ENCODE measurements at regions of chr11 and their contacts with region 1.

Region 1: GRCh38 chr11:65743928-65744698 is 23.5 kb upstream of the RNASEH2C start:
- DNase-seq: peak; percentile 82
- ATAC-seq: peak; percentile 98
- H3K4me3 ChIP-seq: peak overlapping the region in 1 of 3 experiments; percentile 56; a peak in 3 of 6 replicates
- H3K27ac ChIP-seq: no peak overlapping the region
- H3K4me1 ChIP-seq: peaks cover 8% of the 10 kb centered on the region
- H3K27me3 ChIP-seq: no peaks in the 10 kb centered on the region
- CTCF ChIP-seq: peak; percentile 91
- EP300 ChIP-seq: no peak
- POLR2A ChIP-seq: peak; percentile 28 to 60; a peak in 3 of 4 replicates
- RAD21 ChIP-seq: peak; percentile 85

Region 2: DNA sequence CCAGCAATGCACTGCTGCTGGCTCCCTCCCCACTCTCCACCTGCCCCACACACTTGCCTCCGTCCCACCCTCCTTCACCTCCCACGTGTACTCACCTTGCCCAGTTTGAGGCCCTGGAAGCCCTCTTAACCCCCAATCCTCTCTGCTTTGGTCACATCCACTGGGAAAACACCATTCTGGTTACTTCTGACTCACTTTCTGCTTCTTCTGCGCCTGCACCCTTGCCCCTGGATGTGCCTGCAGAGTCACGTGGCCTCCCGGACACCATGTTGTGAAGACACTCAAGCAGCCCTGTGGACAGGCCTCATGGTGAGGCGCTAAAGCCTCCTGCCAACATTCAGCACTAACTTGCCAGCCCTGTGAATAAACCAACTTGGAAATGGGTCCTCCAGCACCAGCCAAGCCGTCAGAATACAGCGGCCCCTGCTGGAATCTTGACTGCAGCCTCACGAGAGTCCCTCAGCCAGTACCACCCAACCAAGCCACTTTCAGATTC is 683.2 kb before region 1 on chr11:
- CTCF ChIA-PET with region 1: no interaction called
- POLR2A ChIA-PET with region 1: no interaction called
- in situ Hi-C with region 1: no loop called
- intact Hi-C with region 1: no loop called
- DNase-seq: peak; percentile 42
- ATAC-seq: peak; percentile 56
- H3K4me3 ChIP-seq: no peak overlapping the region
- H3K27ac ChIP-seq: no peak overlapping the region
- H3K4me1 ChIP-seq: peaks cover 82% of the 10 kb centered on the region
- H3K27me3 ChIP-seq: no peaks in the 10 kb centered on the region
- CTCF ChIP-seq: peak; percentile 71
- EP300 ChIP-seq: no peak
- POLR2A ChIP-seq: no peak
- RAD21 ChIP-seq: peak; percentile 65

Region 3: DNA sequence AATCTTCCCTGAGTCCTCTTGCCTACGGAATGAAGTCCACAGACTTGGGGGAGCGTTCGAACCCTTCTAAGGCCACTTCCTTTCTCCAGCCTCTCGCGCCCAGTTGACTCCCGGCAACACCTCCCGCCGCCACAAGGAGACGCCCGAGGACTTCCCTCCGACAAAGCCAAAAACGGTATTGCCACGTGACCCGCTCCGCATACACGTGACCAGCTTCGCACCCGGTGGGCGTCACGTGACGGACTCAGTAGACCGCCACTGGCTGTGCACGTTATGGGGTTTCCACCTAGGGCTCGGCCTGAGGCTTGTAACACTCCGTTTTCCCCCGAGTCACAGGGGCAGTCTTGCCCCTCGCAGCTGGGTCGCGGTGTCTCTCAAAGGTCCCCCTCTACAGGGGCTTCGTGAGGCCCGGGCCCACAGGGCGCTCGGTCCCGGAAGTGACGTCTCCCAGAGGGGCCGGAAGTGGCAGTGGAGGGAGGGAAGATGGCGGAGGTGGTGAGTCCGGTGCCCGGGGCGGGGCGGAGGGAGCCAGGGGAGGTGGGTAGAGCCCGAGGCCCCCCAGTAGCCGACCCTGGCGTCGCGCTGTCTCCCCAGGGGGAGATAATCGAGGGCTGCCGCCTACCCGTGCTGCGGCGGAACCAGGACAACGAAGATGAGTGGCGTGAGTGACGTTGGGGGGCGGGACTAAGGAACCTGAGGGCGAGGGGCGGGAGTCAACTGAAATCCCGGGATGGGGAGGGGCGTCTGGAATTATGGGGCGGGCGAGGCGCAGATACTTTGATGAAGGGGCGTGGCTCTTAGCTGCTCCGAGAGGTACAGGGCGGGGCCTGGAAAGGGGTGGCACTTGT is 32.1 kb before region 1 on chr11 and contains the start of gene KAT5:
- CTCF ChIA-PET with region 1: interaction called, 4 read pairs
- POLR2A ChIA-PET with region 1: interaction called, 13 read pairs
- in situ Hi-C with region 1: no loop called
- intact Hi-C with region 1: no loop called
- DNase-seq: peak; percentile 95
- ATAC-seq: peak; percentile 85
- H3K4me3 ChIP-seq: peak within 1 kb of the TSS; percentile 61 to 80 (median 66)
- H3K27ac ChIP-seq: peak within 1 kb of the TSS; percentile 96
- H3K4me1 ChIP-seq: peaks cover 27% of the 10 kb centered on the region
- H3K27me3 ChIP-seq: no peaks in the 10 kb centered on the region; a peak in 1 of 5 replicates
- CTCF ChIP-seq: peak; percentile 99
- EP300 ChIP-seq: peak in 1 of 2 experiments; percentile 61; a peak in 3 of 4 replicates
- POLR2A ChIP-seq: peak in 1 of 2 experiments; percentile 55; a peak in 2 of 4 replicates
- RAD21 ChIP-seq: peak; percentile 94
- total RNA-seq, gene KAT5: 45.4 and 48.3 TPM in 2 replicates

Region 4: GRCh38 chr11:65720237-65720934 is 23.7 kb before region 1 on chr11 and contains the start of gene RNASEH2C:
- CTCF ChIA-PET with region 1: no interaction called
- POLR2A ChIA-PET with region 1: interaction called, 15 read pairs
- in situ Hi-C with region 1: no loop called
- intact Hi-C with region 1: no loop called
- DNase-seq: peak; percentile 65
- ATAC-seq: peak; percentile 92
- H3K4me3 ChIP-seq: peak within 1 kb of the TSS; percentile 76 to 89 (median 87)
- H3K27ac ChIP-seq: peak within 1 kb of the TSS; percentile 47
- H3K4me1 ChIP-seq: peaks cover 26% of the 10 kb centered on the region
- H3K27me3 ChIP-seq: no peaks in the 10 kb centered on the region; a peak in 1 of 5 replicates
- CTCF ChIP-seq: peak; percentile 20; the same call in 1 of the 2 replicates
- EP300 ChIP-seq: no peak
- POLR2A ChIP-seq: peak in 1 of 2 experiments; percentile 81; a peak in 2 of 4 replicates
- RAD21 ChIP-seq: peak; percentile 42
- total RNA-seq, gene RNASEH2C: 50.9 and 65.1 TPM in 2 replicates

Region 5: GRCh38 chr11:65773784-65774411 is 29.8 kb after region 1 on chr11:
- CTCF ChIA-PET with region 1: interaction called, 11 read pairs
- POLR2A ChIA-PET with region 1: no interaction called
- in situ Hi-C with region 1: no loop called
- intact Hi-C with region 1: no loop called
- DNase-seq: no peak
- ATAC-seq: no peak
- H3K4me3 ChIP-seq: no peak overlapping the region
- H3K27ac ChIP-seq: no peak overlapping the region
- H3K4me1 ChIP-seq: peaks cover 38% of the 10 kb centered on the region
- H3K27me3 ChIP-seq: no peaks in the 10 kb centered on the region
- CTCF ChIP-seq: peak; percentile 45
- EP300 ChIP-seq: no peak
- POLR2A ChIP-seq: no peak
- RAD21 ChIP-seq: no peak

Region 6: DNA sequence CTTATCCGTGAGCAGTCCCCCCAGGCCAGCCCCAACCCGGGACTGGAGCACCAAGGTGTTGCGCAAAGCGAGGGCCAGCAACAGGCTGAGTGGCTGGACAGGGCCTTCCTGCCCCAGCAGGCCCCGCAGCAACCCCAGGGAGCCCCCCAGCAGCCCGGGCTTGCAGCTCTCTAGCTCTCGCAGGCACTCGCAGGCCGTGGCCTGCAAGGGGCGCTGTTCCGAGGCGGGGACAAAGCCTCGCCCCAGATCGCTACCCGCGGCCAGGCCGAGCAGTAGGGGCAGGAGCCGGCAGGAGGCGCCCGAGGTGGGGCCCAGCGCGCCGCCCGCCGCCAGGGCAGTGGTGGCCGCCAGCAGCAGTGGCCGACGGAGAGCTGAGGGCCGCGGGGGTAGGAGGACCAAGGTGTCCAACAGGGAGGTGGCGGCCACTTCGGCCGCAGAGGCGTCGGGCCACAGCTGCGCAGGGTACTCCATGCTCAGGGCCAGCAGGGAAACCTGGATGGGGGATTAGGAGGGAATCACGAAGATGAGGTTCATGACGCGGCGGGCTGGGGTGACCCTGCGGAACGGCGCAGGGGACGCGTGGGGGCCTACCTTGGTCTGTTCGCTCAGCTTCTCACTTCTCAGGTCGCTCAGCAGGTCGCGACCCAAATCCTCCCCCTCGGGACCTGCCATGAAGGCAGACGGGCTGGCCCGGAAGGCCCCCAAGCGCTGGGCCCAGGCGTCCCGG is 35.9 kb after region 1 on chr11:
- CTCF ChIA-PET with region 1: interaction called, 9 read pairs
- POLR2A ChIA-PET with region 1: interaction called, 10 read pairs
- in situ Hi-C with region 1: no loop called
- intact Hi-C with region 1: no loop called
- DNase-seq: peak; percentile 53
- ATAC-seq: peak; percentile 74
- H3K4me3 ChIP-seq: peak overlapping the region; percentile 59 to 92 (median 62)
- H3K27ac ChIP-seq: peak overlapping the region; percentile 61
- H3K4me1 ChIP-seq: peaks cover 43% of the 10 kb centered on the region
- H3K27me3 ChIP-seq: peaks cover 1 to 28% of the 10 kb centered on the region in 2 experiments; a peak in 4 of 5 replicates
- CTCF ChIP-seq: peak; percentile 80
- EP300 ChIP-seq: no peak
- POLR2A ChIP-seq: peak in 1 of 2 experiments; percentile 19; a peak in 1 of 4 replicates
- RAD21 ChIP-seq: peak; percentile 80

Region 7: DNA sequence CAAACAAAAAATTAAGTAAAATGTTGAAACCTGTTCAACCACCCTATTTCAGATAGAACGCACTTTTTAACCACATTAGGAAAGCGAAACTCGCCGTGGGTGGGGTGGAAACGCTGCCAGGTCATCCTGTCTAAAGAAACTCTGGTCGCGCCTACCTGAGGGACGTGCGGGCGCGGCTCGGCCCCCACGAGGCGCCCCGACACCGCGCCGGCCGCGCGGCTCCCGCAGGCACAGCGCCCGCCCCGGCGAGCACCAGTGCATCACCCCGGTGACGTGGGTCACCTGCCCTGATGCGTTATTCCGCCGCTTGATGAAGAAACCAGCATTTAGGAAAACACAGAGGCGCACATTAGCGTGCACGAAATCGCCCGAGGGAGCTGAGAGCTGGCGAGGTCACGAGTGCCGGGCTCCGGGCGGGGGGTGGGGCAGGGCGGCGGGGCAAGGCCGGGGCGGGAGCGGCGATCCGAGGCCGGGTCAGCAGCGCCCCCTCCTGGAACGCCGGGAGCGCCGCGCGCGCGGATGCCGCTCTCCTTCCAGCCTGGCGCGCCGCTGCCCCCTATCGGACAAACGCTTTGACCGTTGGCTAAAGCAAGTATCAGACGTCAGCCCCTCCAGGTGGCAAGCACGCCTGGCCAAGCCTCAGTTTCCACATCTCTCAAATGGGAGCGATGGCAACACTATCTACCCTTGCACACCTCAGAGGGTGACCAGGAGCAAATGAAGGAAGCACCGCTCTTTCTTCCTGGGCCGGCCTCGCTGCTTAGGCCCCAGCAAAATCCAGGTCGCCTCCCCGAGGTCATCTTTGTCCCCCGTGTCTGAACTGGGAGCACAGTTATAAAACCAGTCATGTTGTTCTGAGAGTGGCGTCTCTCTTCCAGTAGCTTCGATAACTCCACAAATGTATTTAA is 74.0 kb after region 1 on chr11:
- CTCF ChIA-PET with region 1: interaction called, 57 read pairs
- POLR2A ChIA-PET with region 1: interaction called, 8 read pairs
- in situ Hi-C with region 1: loop called (anchors 5 kb)
- intact Hi-C with region 1: loop called (anchors 1 kb)
- DNase-seq: peak; percentile 71
- ATAC-seq: peak; percentile 80
- H3K4me3 ChIP-seq: peak overlapping the region; percentile 51 to 76 (median 63)
- H3K27ac ChIP-seq: no peak overlapping the region
- H3K4me1 ChIP-seq: peaks cover 30% of the 10 kb centered on the region
- H3K27me3 ChIP-seq: 0 out of 5 replicates have a peak, but pooled peaks cover 0 to 4% of the 10 kb centered on the region in 2 experiments
- CTCF ChIP-seq: peak; percentile 95
- EP300 ChIP-seq: no peak
- POLR2A ChIP-seq: 0 out of 4 replicates have a peak, but pooled peaks of 1 of the 2 experiments have one; percentile 30
- RAD21 ChIP-seq: peak; percentile 98

Region 8: GRCh38 chr11:65988791-65989592 is 244.9 kb after region 1 on chr11:
- CTCF ChIA-PET with region 1: interaction called, 10 read pairs
- POLR2A ChIA-PET with region 1: no interaction called
- in situ Hi-C with region 1: no loop called
- intact Hi-C with region 1: no loop called
- DNase-seq: peak; percentile 92
- ATAC-seq: peak; percentile 98
- H3K4me3 ChIP-seq: no peak overlapping the region
- H3K27ac ChIP-seq: no peak overlapping the region
- H3K4me1 ChIP-seq: peaks cover 4% of the 10 kb centered on the region
- H3K27me3 ChIP-seq: no peaks in the 10 kb centered on the region
- CTCF ChIP-seq: peak; percentile 97
- EP300 ChIP-seq: no peak
- POLR2A ChIP-seq: no peak
- RAD21 ChIP-seq: peak; percentile 93